ENCODE measurements at regions of chr12 and their contacts with region 1.

Region 1: DNA sequence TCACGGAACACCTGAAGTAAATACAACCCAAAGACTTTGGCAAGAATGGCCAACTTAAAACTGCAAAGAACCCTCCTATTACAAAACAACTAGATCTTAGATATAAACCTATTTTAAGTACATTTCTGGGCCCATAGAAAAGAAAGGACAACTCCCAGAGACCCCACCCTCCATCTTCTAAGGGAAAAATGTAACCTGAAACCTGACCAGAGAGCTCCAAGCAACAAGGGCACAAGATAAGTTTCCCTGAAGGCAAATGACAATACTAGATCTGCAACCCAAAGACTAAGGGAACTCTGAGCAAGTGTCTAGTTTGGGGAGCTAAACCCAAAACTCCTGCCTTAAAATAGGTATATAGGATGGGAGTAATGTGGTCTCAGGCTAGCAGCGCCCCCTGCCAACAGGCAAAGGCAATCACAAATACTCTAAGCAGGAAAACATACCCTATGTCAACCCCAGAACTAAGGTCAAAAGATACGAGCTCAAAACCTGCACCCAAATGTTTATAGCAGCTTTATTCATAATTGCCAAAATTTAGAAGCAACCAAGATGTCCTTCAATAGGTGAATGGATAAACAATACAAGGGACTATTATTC is 218.9 kb downstream of the ITPR2 start:
- DNase-seq: peak in 1 of 2 experiments; percentile 58
- H3K4me3 ChIP-seq: no peak overlapping the region
- H3K27ac ChIP-seq: no peak overlapping the region
- H3K4me1 ChIP-seq: no peaks in the 10 kb centered on the region
- H3K27me3 ChIP-seq: no peaks in the 10 kb centered on the region
- CTCF ChIP-seq: peak; percentile 23 to 80 (median 70)
- EP300 ChIP-seq: no peak
- POLR2A ChIP-seq: no peak
- RAD21 ChIP-seq: peak; percentile 73 to 80

Region 2: GRCh38 chr12:26434299-26435068 is 179.6 kb before region 1 on chr12:
- CTCF ChIA-PET with region 1: interaction called, 18 read pairs
- POLR2A ChIA-PET with region 1: no interaction called
- DNase-seq: peak in 1 of 2 experiments; percentile 29
- H3K4me3 ChIP-seq: no peak overlapping the region
- H3K27ac ChIP-seq: no peak overlapping the region
- H3K4me1 ChIP-seq: no peaks in the 10 kb centered on the region
- H3K27me3 ChIP-seq: no peaks in the 10 kb centered on the region
- CTCF ChIP-seq: peak in 2 of 3 experiments; percentile 91 to 99; a peak in 3 of 4 replicates
- EP300 ChIP-seq: no peak
- POLR2A ChIP-seq: no peak
- RAD21 ChIP-seq: peak; percentile 82 to 84

Region 3: DNA sequence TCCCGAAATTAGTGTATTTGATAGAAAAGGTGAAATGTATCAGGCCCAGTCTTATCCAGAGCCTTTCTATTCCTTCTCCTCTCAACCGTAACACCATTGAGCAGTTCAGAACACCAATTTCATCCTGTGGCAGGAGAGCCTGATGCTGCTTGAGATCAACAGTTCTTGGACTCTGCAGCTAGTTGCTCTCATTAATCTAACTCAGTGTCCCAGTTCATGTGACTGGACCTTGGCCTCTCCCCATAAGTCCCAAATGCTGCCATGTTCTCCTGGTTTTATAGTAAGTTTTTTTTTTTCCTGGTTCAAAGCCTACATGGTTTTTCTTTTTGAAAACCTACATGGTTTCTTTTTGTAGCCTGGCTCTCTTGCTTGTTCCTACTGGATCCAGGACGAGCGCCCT is 75.0 kb before region 1 on chr12:
- CTCF ChIA-PET with region 1: interaction called, 11 read pairs
- POLR2A ChIA-PET with region 1: no interaction called
- DNase-seq: no peak
- H3K4me3 ChIP-seq: no peak overlapping the region
- H3K27ac ChIP-seq: no peak overlapping the region
- H3K4me1 ChIP-seq: no peaks in the 10 kb centered on the region
- H3K27me3 ChIP-seq: no peaks in the 10 kb centered on the region
- CTCF ChIP-seq: no peak
- EP300 ChIP-seq: no peak
- POLR2A ChIP-seq: no peak
- RAD21 ChIP-seq: no peak

Region 4: DNA sequence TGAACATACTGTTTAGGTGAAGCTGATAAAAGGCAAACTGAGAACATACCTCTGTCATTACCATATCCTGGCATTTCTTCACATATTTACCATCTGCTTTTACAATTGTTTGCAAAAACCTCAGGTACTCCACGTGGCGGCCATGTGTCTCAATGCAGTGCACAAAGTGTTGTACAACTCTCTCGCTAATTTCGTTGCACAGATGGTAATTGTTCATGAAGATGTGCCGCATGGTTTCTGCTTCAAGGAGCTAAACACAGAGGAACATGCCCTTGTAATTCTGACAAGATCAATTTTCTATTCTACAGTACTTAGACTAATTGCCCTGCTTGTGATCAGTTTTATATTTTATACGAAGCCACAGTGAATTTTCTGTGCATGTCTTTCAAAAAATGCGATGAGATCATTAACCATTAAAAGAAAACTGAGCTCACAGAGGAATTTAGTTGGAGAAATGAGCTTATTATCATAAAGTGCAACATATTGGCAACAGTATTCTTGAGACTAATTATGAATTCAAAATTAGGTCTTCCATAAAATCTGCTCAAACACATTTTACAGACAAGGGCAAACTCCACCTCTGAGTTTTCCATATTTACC is 14.9 kb before region 1 on chr12:
- CTCF ChIA-PET with region 1: interaction called, 31 read pairs
- POLR2A ChIA-PET with region 1: no interaction called
- DNase-seq: no peak
- H3K4me3 ChIP-seq: no peak overlapping the region
- H3K27ac ChIP-seq: no peak overlapping the region
- H3K4me1 ChIP-seq: no peaks in the 10 kb centered on the region
- H3K27me3 ChIP-seq: no peaks in the 10 kb centered on the region
- CTCF ChIP-seq: no peak
- EP300 ChIP-seq: no peak
- POLR2A ChIP-seq: no peak
- RAD21 ChIP-seq: no peak

Region 5: GRCh38 chr12:26651566-26652188 is 37.6 kb after region 1 on chr12:
- CTCF ChIA-PET with region 1: interaction called, 17 read pairs
- POLR2A ChIA-PET with region 1: no interaction called
- DNase-seq: peak; percentile 59 to 93
- H3K4me3 ChIP-seq: no peak overlapping the region
- H3K27ac ChIP-seq: no peak overlapping the region
- H3K4me1 ChIP-seq: peaks cover 0 to 1% (median 0%) of the 10 kb centered on the region in 4 experiments; a peak in 1 of 7 replicates
- H3K27me3 ChIP-seq: no peaks in the 10 kb centered on the region
- CTCF ChIP-seq: peak; percentile 14 to 85 (median 83)
- EP300 ChIP-seq: no peak
- POLR2A ChIP-seq: no peak
- RAD21 ChIP-seq: peak; percentile 92 to 95

Measured in H1 (cell line).